ENCODE measurements at regions of chr4 and their contacts with region 1.

Region 1: DNA sequence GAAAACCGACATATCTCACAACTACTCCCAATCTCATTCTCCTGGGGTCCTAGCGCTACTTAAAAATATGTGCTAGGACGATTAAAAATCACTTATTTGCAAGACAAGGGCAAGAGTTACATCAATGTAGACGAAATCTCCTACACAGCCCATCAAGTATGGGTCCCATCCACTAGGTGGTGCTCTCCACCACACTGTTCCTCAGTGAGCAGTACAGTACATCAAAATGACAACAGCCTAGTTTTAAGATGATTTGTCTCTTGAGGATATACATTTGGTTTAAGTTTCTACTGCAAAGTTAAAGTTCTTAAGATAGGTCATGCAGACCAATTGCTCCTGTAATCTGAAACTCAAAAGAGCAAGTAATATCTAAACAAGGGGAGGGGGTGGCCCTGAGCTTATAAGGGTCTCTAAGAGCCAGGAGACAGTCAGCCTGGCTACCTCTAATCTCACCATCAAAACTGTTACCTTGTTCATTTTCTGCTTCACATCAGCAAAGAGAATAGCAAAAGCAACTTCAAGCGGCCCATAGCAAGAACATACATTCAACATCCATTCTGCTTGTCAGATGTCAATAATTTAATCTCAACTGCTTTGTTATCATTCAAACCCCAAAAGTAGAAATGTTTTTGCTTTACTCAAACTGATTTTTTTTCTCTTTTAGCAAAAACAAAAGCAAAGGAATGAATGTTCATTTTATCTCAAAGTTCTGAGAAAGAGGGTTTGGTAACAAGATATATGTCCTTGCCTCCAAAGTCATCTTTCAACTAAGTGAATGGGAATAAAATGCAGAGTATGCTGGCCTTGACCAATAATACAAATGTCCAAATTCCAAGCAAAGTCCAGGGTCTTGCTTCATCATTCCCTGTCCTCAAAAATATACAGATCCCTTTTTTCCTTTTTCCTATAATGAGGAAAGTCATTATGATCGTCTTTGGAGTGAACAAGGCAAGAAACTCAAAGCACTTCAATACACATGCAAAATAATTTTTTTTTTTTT is 53.1 kb downstream of the STX18 start:
- DNase-seq: peak; percentile 44 to 61
- ATAC-seq: peak; percentile 82 to 95 (median 92)
- H3K4me3 ChIP-seq: no peak overlapping the region
- H3K27ac ChIP-seq: no peak overlapping the region
- H3K4me1 ChIP-seq: no peaks in the 10 kb centered on the region
- H3K27me3 ChIP-seq: no peaks in the 10 kb centered on the region
- CTCF ChIP-seq: peak; percentile 92

Region 2: DNA sequence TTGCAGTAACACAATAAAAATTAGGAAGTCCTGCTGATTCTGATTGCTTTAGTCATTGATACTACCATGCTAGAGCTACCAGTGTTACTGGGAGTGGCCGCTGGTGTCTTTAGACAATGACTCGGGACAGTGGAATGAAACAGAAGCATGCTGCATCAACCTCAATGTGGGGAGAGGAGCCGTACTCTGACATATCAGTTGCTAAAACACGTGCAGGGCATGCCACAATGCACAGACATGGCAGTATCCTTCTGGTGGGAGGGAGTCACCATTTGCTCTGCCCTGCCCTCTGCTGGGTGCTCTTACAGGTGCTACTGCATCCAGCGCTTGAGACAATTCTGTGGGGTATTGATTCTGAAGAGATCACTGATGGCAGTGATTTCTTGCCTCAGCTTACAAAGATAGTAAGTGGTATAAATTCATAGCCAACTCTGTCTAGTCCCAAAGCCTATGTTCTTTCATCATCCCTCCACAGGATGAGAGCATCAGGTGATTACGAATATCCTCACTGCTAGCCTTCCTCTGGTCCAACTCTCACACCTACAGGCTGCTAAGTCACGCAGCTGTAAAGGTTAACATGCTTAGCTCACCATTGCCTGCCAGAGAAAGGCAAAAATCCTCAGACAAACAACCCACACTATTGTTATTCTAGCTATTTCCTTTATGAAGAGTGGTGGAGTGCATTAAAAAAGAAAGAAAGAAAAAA is 58.1 kb before region 1 on chr4:
- intact Hi-C with region 1: no loop called
- DNase-seq: no peak
- ATAC-seq: peak; percentile 54 to 71 (median 61)
- H3K4me3 ChIP-seq: no peak overlapping the region
- H3K27ac ChIP-seq: no peak overlapping the region
- H3K4me1 ChIP-seq: no peaks in the 10 kb centered on the region
- H3K27me3 ChIP-seq: no peaks in the 10 kb centered on the region
- CTCF ChIP-seq: peak; percentile 43

Region 3: GRCh38 chr4:4555916-4556315 is 67.2 kb after region 1 on chr4:
- intact Hi-C with region 1: no loop called
- DNase-seq: no peak
- ATAC-seq: no peak
- H3K4me3 ChIP-seq: no peak overlapping the region
- H3K27ac ChIP-seq: no peak overlapping the region
- H3K4me1 ChIP-seq: no peaks in the 10 kb centered on the region
- H3K27me3 ChIP-seq: no peaks in the 10 kb centered on the region
- CTCF ChIP-seq: no peak

Region 4: DNA sequence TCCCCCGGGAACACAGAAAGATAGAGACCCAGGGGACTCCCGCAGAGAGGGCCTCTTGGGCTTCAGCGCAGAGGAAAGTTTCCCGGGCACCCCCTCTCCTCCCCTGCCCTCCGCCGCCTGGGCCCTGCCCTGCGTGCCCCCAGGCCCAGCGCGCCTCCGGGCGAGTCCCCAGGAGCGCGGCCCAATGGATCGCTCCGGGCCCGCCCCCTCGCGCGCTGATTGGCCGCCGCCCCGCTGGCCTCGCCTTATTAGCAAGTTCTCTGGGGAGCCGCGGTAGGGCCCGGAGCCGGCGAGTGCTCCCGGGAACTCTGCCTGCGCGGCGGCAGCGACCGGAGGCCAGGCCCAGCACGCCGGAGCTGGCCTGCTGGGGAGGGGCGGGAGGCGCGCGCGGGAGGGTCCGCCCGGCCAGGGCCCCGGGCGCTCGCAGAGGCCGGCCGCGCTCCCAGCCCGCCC is 370.7 kb after region 1 on chr4 and contains the start of gene MSX1:
- intact Hi-C with region 1: loop called in 1 of 2 experiments (anchors 10 kb)
- DNase-seq: peak; percentile 89 to 91
- ATAC-seq: peak; percentile 95 to 98 (median 96)
- H3K4me3 ChIP-seq: peak within 1 kb of the TSS; percentile 83
- H3K27ac ChIP-seq: peak within 1 kb of the TSS; percentile 46
- H3K4me1 ChIP-seq: peaks cover 8% of the 10 kb centered on the region
- H3K27me3 ChIP-seq: peaks cover 0 to 100% (median 64%) of the 10 kb centered on the region in 3 donors
- CTCF ChIP-seq: no peak
- total RNA-seq, gene MSX1: 1.4 to 3.7 (median 3.6) TPM

Region 5: GRCh38 chr4:4869731-4870571 is 381.2 kb after region 1 on chr4:
- intact Hi-C with region 1: loop called in 1 of 2 experiments (anchors 10 kb)
- DNase-seq: no peak
- ATAC-seq: no peak
- H3K4me3 ChIP-seq: no peak overlapping the region
- H3K27ac ChIP-seq: no peak overlapping the region
- H3K4me1 ChIP-seq: peaks cover 5% of the 10 kb centered on the region
- H3K27me3 ChIP-seq: peaks cover 4 to 99% (median 74%) of the 10 kb centered on the region in 3 donors
- CTCF ChIP-seq: no peak

Region 6: GRCh38 chr4:4995103-4995907 is 506.6 kb after region 1 on chr4:
- intact Hi-C with region 1: loop called in 1 of 2 experiments (anchors 10 kb)
- DNase-seq: peak; percentile 72 to 81
- ATAC-seq: peak in 3 of 4 donors; percentile 49 to 63 (median 61)
- H3K4me3 ChIP-seq: no peak overlapping the region
- H3K27ac ChIP-seq: no peak overlapping the region
- H3K4me1 ChIP-seq: no peaks in the 10 kb centered on the region
- H3K27me3 ChIP-seq: no peaks in the 10 kb centered on the region
- CTCF ChIP-seq: peak; percentile 72

Region 7: GRCh38 chr4:5812506-5813229 is 1324.0 kb after region 1 on chr4:
- intact Hi-C with region 1: loop called in 1 of 2 experiments (anchors 10 kb)
- DNase-seq: no peak
- ATAC-seq: peak in 1 of 4 donors; percentile 67
- H3K4me3 ChIP-seq: no peak overlapping the region
- H3K27ac ChIP-seq: no peak overlapping the region
- H3K4me1 ChIP-seq: no peaks in the 10 kb centered on the region
- H3K27me3 ChIP-seq: no peaks in the 10 kb centered on the region
- CTCF ChIP-seq: peak; percentile 52

Measured in psoas muscle (tissue), 8 donors.